HepG2 (cell line): ENCODE measurements at regions of chr2 and their contacts with region 1.

Region 1: GRCh38 chr2:55419679-55420438 is at the start of gene CCDC88A:
- DNase-seq: peak; percentile 92
- ATAC-seq: peak; percentile 93
- H3K4me3 ChIP-seq: peak within 1 kb of the TSS; percentile 88 to 98 (median 89)
- H3K27ac ChIP-seq: peak within 1 kb of the TSS; percentile 86
- H3K4me1 ChIP-seq: peaks cover 69% of the 10 kb centered on the region
- H3K27me3 ChIP-seq: peaks cover 0 to 4% of the 10 kb centered on the region in 2 experiments; a peak in 1 of 5 replicates
- CTCF ChIP-seq: peak; percentile 58
- EP300 ChIP-seq: peak; percentile 72 to 76; a peak in 3 of 4 replicates
- POLR2A ChIP-seq: peak; percentile 92 to 97
- RAD21 ChIP-seq: peak; percentile 82
- total RNA-seq, gene CCDC88A: 84.1 and 112 TPM in 2 replicates

Region 2: DNA sequence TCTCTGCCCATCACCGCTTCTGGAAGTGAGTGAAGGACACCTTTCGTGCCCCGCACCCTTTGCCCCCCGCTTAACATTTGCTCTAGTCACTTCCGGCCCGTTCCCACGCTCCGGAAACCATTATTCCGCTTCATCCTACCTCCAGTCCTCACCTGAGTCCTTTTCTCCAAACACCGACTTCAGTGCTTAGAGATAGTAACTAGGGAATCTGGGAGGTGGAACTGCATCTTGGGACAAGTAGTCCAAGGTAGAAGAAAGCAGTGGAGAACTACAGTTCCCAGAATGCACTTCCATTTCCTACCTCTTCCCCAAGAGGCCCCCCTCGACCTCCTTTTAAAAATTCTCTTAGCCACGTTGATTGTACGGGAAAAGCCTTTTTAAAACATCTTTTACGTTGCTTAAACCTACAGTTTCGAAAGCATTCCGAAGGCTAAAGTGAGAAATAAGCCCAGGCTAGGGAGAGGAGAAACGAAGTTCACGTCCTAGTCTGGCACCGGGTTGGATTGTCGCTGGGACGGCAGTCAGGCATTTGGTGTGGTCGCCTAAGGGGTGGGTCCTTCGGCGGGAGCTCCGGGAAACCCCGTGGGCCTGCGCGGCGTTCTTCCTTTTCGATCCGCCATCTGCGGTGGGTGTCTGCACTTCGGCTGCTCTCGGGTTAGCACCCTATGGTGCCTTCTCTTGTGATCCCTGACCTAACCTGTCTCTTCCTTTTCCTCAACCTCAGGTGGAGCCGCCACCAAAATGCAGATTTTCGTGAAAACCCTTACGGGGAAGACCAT is 187.6 kb before region 1 on chr2 and contains the starts of genes CLHC1 and RPS27A:
- CTCF ChIA-PET with region 1: no interaction called
- POLR2A ChIA-PET with region 1: interaction called, 3 read pairs
- in situ Hi-C with region 1: no loop called
- intact Hi-C with region 1: loop called (anchors 10 kb)
- DNase-seq: peak; percentile 99
- ATAC-seq: peak; percentile 96
- H3K4me3 ChIP-seq: peak within 1 kb of the TSS; percentile 82 to 95 (median 93)
- H3K27ac ChIP-seq: peak within 1 kb of the TSS; percentile 98
- H3K4me1 ChIP-seq: peaks cover 59% of the 10 kb centered on the region
- H3K27me3 ChIP-seq: no peaks in the 10 kb centered on the region; a peak in 1 of 5 replicates
- CTCF ChIP-seq: no peak
- EP300 ChIP-seq: 0 out of 4 replicates have a peak, but pooled peaks of 1 of the 2 experiments have one; percentile 28
- POLR2A ChIP-seq: peak; percentile 98
- RAD21 ChIP-seq: peak; percentile 50
- total RNA-seq, gene CLHC1: 12.1 and 12.6 TPM in 2 replicates
- total RNA-seq, gene RPS27A: 2,779 and 3,447 TPM in 2 replicates

Region 3: GRCh38 chr2:55268907-55269644 is 150.8 kb before region 1 on chr2 and contains the start of gene MTIF2:
- CTCF ChIA-PET with region 1: no interaction called
- POLR2A ChIA-PET with region 1: no interaction called
- in situ Hi-C with region 1: no loop called
- intact Hi-C with region 1: loop called (anchors 1 kb)
- DNase-seq: peak; percentile 95
- ATAC-seq: peak; percentile 99
- H3K4me3 ChIP-seq: peak within 1 kb of the TSS; percentile 73 to 81 (median 73)
- H3K27ac ChIP-seq: peak within 1 kb of the TSS; percentile 91
- H3K4me1 ChIP-seq: peaks cover 16% of the 10 kb centered on the region
- H3K27me3 ChIP-seq: no peaks in the 10 kb centered on the region; a peak in 1 of 5 replicates
- CTCF ChIP-seq: peak; percentile 64
- EP300 ChIP-seq: peak; percentile 69 to 78
- POLR2A ChIP-seq: peak; percentile 99
- RAD21 ChIP-seq: no peak; the same call in 1 of the 2 replicates
- total RNA-seq, gene MTIF2: 92.1 and 118 TPM in 2 replicates

Region 4: GRCh38 chr2:55282110-55282917 is 137.5 kb before region 1 on chr2:
- CTCF ChIA-PET with region 1: no interaction called
- POLR2A ChIA-PET with region 1: no interaction called
- in situ Hi-C with region 1: no loop called
- intact Hi-C with region 1: loop called (anchors 5 kb)
- DNase-seq: peak; percentile 79
- ATAC-seq: peak; percentile 98
- H3K4me3 ChIP-seq: peak overlapping the region; percentile 69 to 82 (median 81)
- H3K27ac ChIP-seq: peak overlapping the region; percentile 89
- H3K4me1 ChIP-seq: peaks cover 70% of the 10 kb centered on the region
- H3K27me3 ChIP-seq: no peaks in the 10 kb centered on the region; a peak in 1 of 5 replicates
- CTCF ChIP-seq: peak; percentile 40
- EP300 ChIP-seq: no peak
- POLR2A ChIP-seq: peak; percentile 92
- RAD21 ChIP-seq: peak; percentile 70

Region 5: DNA sequence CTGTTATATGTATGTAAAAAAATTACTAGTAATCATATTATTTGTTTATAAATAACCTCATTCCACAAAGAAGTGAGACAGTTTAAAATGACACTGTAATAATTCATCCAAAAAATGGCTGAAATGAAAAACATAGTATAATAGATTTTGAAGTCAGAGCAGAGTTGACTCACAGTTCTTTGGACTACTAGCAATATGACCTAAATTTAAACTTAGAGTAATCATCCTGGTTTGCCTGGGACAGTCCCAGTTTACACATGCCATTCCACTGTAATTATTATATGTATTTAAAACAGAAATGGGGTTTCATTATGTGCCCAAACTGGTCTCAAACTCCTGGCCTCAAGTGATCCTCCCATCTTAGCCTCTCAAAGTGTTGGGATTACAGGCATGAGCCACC is 48.5 kb before region 1 on chr2:
- CTCF ChIA-PET with region 1: no interaction called
- POLR2A ChIA-PET with region 1: no interaction called
- in situ Hi-C with region 1: no loop called
- intact Hi-C with region 1: no loop called
- DNase-seq: no peak
- ATAC-seq: no peak
- H3K4me3 ChIP-seq: no peak overlapping the region
- H3K27ac ChIP-seq: no peak overlapping the region
- H3K4me1 ChIP-seq: no peaks in the 10 kb centered on the region
- H3K27me3 ChIP-seq: no peaks in the 10 kb centered on the region
- CTCF ChIP-seq: no peak
- EP300 ChIP-seq: no peak
- POLR2A ChIP-seq: no peak
- RAD21 ChIP-seq: no peak

Region 6: DNA sequence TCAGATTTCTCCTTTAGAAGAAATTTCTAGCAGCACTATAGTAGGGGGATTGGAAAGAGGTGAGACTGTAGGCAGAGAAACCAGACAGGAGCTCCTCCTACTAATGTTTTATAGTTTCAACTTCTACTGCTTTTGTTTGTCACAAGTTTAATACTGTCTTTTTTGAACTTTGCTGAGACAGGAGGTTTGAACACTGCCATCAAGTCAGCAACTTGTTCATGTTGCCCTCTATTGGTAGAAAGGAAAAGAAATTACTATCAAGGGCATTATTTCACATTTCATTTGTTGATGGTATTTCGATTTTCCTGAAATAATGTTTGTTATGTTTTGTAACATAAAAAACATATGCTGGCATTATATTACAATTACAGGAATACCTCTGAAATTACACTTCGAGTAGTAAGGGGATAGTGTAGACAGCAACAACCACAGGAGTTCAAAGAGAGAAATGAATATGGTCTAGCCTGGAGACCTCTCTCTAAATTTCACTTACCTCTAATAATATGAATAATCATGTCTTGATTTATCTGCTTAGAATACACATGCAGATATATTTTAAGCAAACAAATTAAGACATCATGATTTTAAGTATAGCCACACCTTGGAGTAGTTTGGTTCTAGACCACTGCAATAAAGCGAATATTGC is 12.2 kb after region 1 on chr2:
- CTCF ChIA-PET with region 1: no interaction called
- POLR2A ChIA-PET with region 1: interaction called, 5 read pairs
- in situ Hi-C with region 1: no loop called
- intact Hi-C with region 1: loop called (anchors 1 kb)
- DNase-seq: peak; percentile 32
- ATAC-seq: peak; percentile 58
- H3K4me3 ChIP-seq: no peak overlapping the region
- H3K27ac ChIP-seq: no peak overlapping the region
- H3K4me1 ChIP-seq: peaks cover 25% of the 10 kb centered on the region
- H3K27me3 ChIP-seq: no peaks in the 10 kb centered on the region
- CTCF ChIP-seq: peak; percentile 69
- EP300 ChIP-seq: no peak
- POLR2A ChIP-seq: no peak
- RAD21 ChIP-seq: peak; percentile 29; the same call in 1 of the 2 replicates

Region 7: DNA sequence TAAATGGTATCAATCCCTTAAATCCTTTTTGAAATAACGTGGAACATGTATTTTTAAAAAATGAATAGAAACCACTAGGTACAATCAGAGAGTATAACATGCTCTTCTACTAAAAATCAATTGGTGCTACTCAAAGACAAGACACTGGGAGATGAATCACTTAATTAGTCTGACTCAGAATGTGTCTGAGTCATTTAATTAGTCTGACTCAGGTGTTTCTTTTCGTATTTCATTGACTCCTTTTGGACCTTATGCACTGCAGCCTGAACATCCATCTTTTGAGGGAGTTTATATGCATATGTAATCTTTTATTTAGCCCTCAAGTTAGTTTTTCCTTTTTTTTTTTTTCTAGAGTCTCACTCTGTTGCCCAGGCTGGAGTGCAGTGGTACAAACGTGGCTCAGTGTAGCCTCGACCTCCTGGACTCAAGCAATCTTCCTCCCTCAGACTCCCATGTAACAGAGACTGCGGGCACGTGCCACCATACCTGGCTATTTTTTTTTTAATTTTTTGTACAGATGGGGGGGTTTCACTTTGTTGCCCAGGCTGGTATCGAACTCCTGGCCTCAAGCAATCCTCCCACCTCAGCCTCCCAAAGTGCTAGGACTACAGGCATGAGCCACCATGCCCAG is 171.1 kb after region 1 on chr2:
- CTCF ChIA-PET with region 1: no interaction called
- POLR2A ChIA-PET with region 1: no interaction called
- in situ Hi-C with region 1: no loop called
- intact Hi-C with region 1: no loop called
- DNase-seq: no peak
- ATAC-seq: no peak
- H3K4me3 ChIP-seq: no peak overlapping the region
- H3K27ac ChIP-seq: no peak overlapping the region
- H3K4me1 ChIP-seq: no peaks in the 10 kb centered on the region
- H3K27me3 ChIP-seq: no peaks in the 10 kb centered on the region
- CTCF ChIP-seq: no peak
- EP300 ChIP-seq: no peak
- POLR2A ChIP-seq: no peak
- RAD21 ChIP-seq: no peak

Region 8: DNA sequence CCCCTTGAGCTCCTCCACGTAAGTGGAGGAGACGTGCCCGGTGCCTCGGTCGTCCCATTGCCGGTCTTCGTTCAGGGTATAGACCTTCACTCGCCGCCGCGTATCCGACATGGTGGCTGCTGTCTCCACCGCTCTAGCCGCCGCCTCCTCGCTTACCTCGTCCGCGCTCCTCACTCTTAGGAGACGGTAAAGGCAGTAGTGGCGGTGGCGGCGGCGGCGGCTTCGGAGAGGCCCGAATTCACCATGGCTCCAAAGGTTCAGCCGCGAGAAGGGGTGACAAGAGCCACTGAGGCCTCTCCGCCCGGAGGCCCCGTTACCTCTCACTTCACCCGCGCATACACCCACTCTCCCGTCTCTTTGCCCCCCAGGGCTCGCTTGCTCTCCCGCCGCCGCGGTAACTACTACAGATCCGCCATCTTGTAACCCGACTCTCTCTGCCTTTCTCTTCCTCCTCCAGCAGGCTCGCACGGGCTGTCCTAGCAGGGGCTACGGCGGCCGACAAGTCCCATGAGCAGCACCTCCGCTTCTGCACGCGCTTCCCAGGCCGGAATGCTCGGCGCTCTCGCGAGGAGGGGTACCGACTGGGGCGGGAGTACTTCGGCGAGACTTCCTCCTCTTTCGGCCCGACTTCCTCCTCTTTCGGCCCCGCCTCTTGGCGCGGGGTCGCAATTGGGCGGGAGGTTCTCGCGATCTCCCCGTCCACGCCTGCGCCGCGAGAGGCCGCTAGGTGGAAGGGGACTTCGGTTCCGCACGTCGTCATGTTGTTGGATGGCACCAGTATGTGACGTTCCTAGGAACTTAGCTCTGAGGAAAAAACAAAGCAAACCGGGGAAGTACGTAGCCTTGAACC is 197.5 kb after region 1 on chr2 and contains the start of gene PPP4R3B:
- CTCF ChIA-PET with region 1: no interaction called
- POLR2A ChIA-PET with region 1: interaction called, 3 read pairs
- in situ Hi-C with region 1: no loop called
- intact Hi-C with region 1: loop called (anchors 5 kb)
- DNase-seq: peak; percentile 99
- ATAC-seq: peak; percentile 89
- H3K4me3 ChIP-seq: peak within 1 kb of the TSS; percentile 90 to 99 (median 93)
- H3K27ac ChIP-seq: peak within 1 kb of the TSS; percentile 95
- H3K4me1 ChIP-seq: peaks cover 42% of the 10 kb centered on the region
- H3K27me3 ChIP-seq: peaks cover 0 to 5% of the 10 kb centered on the region in 2 experiments; a peak in 1 of 5 replicates
- CTCF ChIP-seq: peak; percentile 70
- EP300 ChIP-seq: peak in 1 of 2 experiments; percentile 73; a peak in 2 of 4 replicates
- POLR2A ChIP-seq: peak; percentile 92 to 98
- RAD21 ChIP-seq: peak; percentile 39; the same call in 1 of the 2 replicates
- total RNA-seq, gene PPP4R3B: 53.0 and 86.9 TPM in 2 replicates